HCT116 (cell line): ENCODE measurements at regions of chr7 and their contacts with region 1.

Region 1: GRCh38 chr7:149497456-149498261 is at the start of gene ZNF746:
- DNase-seq: peak; percentile 41
- ATAC-seq: peak; percentile 91
- H3K4me3 ChIP-seq: peak within 1 kb of the TSS; percentile 80 to 88
- H3K27ac ChIP-seq: peak within 1 kb of the TSS; percentile 86
- H3K4me1 ChIP-seq: peaks cover 8 to 20% of the 10 kb centered on the region in 2 experiments
- H3K27me3 ChIP-seq: no peaks in the 10 kb centered on the region
- CTCF ChIP-seq: peak; percentile 34 to 57 (median 49); a peak in 4 of 6 replicates
- POLR2A ChIP-seq: peak; percentile 64
- RAD21 ChIP-seq: peak; percentile 68
- total RNA-seq, gene ZNF746: 18.7 TPM

Region 2: DNA sequence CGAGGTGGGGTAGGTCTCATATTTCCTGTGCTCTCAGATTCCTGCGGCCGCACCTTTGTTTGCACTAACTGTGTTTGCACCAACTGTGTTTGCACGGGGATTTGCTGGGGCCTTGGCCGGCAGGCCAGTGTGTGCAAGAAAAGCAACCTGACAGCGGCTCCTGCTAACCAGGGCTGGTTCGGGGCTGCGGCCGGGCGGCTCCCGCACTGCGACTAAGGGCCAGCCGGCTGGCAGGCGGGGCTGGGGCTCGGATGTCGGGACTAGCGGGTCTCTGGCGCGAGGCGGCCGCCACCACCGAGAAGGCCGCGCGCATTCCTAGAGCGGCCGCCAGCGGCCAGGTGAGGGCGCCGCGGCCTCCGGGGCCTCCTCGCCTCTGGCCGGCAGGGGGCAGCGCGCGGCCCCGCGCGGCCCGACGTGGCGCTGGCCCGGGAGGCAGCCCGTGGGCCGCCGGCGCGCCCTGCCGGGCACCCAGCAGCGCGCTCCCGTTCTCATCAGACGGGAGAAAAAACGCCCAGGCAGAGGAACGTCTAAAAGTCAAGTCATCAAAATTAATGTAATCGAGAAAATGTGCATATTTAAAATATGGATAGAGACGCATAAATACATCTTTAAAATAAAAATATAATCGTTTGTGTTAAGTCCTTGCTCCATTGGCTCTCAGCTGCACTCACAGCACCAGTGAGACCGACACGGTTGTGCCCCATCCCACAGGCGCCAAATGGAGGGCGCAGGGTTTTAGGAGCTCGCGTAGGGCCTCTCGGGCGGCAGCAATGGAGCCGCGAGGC is 75.3 kb before region 1 on chr7:
- CTCF ChIA-PET with region 1: no interaction called
- POLR2A ChIA-PET with region 1: no interaction called
- RAD21 ChIA-PET with region 1: no interaction called
- intact Hi-C with region 1: loop called (anchors 2 kb)
- DNase-seq: peak; percentile 53
- ATAC-seq: peak; percentile 98
- H3K4me3 ChIP-seq: peak overlapping the region; percentile 36 to 52
- H3K27ac ChIP-seq: peak overlapping the region; percentile 20; the same call in 1 of the 2 replicates
- H3K4me1 ChIP-seq: peaks cover 4 to 8% of the 10 kb centered on the region in 2 experiments; a peak in 2 of 4 replicates
- H3K27me3 ChIP-seq: no peaks in the 10 kb centered on the region
- CTCF ChIP-seq: peak; percentile 28 to 91 (median 62)
- POLR2A ChIP-seq: no peak
- RAD21 ChIP-seq: peak; percentile 58